ENCODE measurements at regions of chr1 and their contacts with region 1.

Region 1: GRCh38 chr1:70410604-70411359 is at the start of gene CTH:
- DNase-seq: peak; percentile 92
- H3K4me3 Mint-ChIP-seq: peak within 1 kb of the TSS; percentile 97
- H3K27ac Mint-ChIP-seq: peak within 1 kb of the TSS; percentile 95
- H3K4me1 Mint-ChIP-seq: peaks cover 23% of the 10 kb centered on the region
- H3K27me3 Mint-ChIP-seq: peaks cover 5% of the 10 kb centered on the region
- total RNA-seq, gene CTH: 12.3 and 12.9 TPM in 2 replicates

Region 2: GRCh38 chr1:70156529-70157120 is 254.2 kb before region 1 on chr1:
- intact Hi-C with region 1: loop called (anchors 10 kb)
- DNase-seq: no peak
- H3K4me3 Mint-ChIP-seq: no peak overlapping the region
- H3K27ac Mint-ChIP-seq: no peak overlapping the region
- H3K4me1 Mint-ChIP-seq: peaks cover 3% of the 10 kb centered on the region
- H3K27me3 Mint-ChIP-seq: no peaks in the 10 kb centered on the region

Region 3: GRCh38 chr1:70221241-70222121 is 189.3 kb before region 1 on chr1 and contains the start of gene SRSF11:
- intact Hi-C with region 1: loop called (anchors 5 kb)
- DNase-seq: peak; percentile 95
- H3K4me3 Mint-ChIP-seq: peak within 1 kb of the TSS; percentile 93
- H3K27ac Mint-ChIP-seq: peak within 1 kb of the TSS; percentile 97
- H3K4me1 Mint-ChIP-seq: peaks cover 35% of the 10 kb centered on the region
- H3K27me3 Mint-ChIP-seq: no peaks in the 10 kb centered on the region
- total RNA-seq, gene SRSF11: 194 and 195 TPM in 2 replicates

Region 4: GRCh38 chr1:70397014-70397413 is 13.8 kb before region 1 on chr1:
- intact Hi-C with region 1: no loop called
- DNase-seq: no peak
- H3K4me3 Mint-ChIP-seq: no peak overlapping the region
- H3K27ac Mint-ChIP-seq: no peak overlapping the region
- H3K4me1 Mint-ChIP-seq: no peaks in the 10 kb centered on the region
- H3K27me3 Mint-ChIP-seq: peaks cover 17% of the 10 kb centered on the region

Region 5: GRCh38 chr1:70459496-70460225 is 48.9 kb after region 1 on chr1:
- intact Hi-C with region 1: loop called (anchors 5 kb)
- DNase-seq: no peak
- H3K4me3 Mint-ChIP-seq: no peak overlapping the region
- H3K27ac Mint-ChIP-seq: no peak overlapping the region
- H3K4me1 Mint-ChIP-seq: no peaks in the 10 kb centered on the region
- H3K27me3 Mint-ChIP-seq: no peaks in the 10 kb centered on the region

Region 6: DNA sequence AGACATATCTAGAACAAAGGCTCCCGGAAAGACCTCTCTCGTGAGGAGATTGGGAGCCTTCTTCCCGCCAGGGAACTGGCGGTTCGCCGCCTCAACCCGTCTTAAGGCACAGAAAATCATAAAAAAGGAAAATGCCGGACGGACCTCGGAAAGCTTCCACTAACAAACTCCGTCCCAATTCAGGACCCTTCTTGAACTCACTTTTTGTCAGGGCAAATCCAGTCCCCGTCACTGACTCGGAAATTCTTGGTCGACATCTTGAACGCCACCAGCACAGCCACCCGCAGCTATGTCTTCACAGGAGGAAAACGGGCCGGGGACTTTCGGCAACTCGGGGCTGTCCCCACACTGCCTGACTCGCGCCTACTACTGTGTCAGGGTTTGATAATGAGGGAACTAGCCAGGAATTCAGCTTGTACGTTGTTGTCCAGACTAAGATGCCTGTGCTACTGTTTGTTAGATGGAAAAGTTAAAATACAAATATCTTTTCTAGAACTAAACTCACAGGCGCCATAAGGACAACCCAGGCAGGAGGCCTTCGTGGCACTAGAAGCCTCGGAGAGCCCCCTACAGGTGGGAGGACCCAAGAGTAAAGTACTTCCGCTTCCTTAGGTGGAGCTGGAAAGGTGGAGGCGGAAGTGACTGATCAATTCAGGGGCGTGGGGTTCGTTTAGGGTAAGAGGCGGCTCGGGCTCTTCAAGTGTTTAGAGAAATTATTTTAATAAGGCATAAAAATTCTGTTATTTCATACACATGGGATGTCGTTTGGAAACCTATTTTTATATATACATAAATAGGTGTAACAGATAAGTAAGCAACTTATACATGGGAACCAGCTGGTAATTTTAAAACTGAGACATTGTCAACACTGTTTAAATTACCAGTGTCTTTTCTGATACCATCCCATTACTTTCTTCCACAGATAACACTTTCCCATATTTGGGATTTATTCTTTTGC is 670.2 kb after region 1 on chr1 and contains the start of gene ZRANB2:
- intact Hi-C with region 1: loop called (anchors 10 kb)
- DNase-seq: peak; percentile 85
- H3K4me3 Mint-ChIP-seq: peak within 1 kb of the TSS; percentile 98
- H3K27ac Mint-ChIP-seq: peak within 1 kb of the TSS; percentile 100
- H3K4me1 Mint-ChIP-seq: peaks cover 16% of the 10 kb centered on the region
- H3K27me3 Mint-ChIP-seq: peaks cover 14% of the 10 kb centered on the region
- total RNA-seq, gene ZRANB2: 131 and 135 TPM in 2 replicates

Measured in activated T-helper 2 cell treated with anti-CD3 and anti-CD28 coated beads, Interferon-gamma antibody, Interleukin-2, Interleukin-4, amounts not matched to agents 10 μg/mL and 5 μg/mL and 100 μg/mL, durations not matched to agents 14 hours and 24 hours and 36 hours (primary cell).